HEK293 (cell line): ENCODE measurements at regions of chr12 and their contacts with region 1.

Region 1: DNA sequence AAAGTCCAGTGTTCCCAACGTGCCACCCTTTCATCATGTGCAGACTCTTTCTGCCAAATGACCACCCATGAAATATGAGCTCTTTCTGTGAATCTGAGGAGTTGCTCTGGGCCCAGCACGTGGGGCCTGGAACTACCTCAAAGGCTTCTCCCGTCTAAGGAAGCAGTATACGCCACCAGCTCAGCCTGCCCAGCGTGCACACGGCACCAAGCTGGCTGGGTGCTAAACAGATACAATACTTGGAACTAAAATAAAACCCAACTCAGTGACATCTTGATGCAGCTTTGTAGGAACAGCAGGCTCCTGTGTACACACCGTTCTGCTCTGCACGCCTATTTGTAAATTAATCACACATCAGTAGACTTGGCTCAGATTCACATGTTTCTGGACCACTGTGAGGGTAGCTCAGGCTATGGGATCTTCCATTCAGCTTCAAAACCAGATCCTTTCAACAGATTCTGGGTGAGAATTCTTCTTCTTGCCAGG is 74.8 kb downstream of the ARL6IP4 start:
- H3K4me3 ChIP-seq: no peak overlapping the region
- H3K27ac ChIP-seq: no peak overlapping the region
- H3K4me1 ChIP-seq: no peaks in the 10 kb centered on the region
- CTCF ChIP-seq: no peak

Region 2: DNA sequence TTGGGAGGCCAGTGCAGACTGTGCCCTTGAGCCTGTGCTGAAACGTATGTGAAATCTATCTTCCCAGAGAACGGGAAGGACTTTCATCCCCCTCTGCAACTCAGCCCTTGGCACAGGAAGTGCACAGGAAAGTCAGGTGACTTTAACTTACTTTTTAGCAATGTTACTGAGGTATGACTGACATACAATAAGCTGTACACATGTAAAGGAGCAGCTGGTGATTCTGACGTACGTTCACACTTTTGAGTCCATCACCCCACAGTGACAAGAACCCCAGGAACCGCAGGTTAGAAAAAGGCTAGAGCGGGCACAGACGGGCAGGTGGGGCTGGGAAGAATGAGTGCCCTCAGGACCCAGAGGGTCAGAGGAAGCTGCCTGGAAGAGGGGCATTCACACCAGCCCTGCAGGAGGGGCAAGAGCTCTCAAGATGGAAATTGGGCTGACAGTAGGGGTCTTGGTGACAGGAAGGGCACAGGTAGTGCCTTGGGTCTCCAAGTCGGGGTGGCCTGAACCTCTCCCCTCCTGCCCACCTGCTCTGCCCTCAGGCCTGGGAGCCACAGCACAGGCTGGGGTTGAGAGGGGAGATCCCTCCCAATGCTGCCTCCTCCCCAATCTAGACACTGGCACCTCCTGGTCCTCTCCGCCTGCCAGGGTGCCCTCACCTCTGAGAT is 26.7 kb before region 1 on chr12:
- CTCF ChIA-PET with region 1: no interaction called
- POLR2A ChIA-PET with region 1: no interaction called
- H3K4me3 ChIP-seq: no peak overlapping the region
- H3K27ac ChIP-seq: no peak overlapping the region
- H3K4me1 ChIP-seq: no peaks in the 10 kb centered on the region
- CTCF ChIP-seq: no peak

Region 3: DNA sequence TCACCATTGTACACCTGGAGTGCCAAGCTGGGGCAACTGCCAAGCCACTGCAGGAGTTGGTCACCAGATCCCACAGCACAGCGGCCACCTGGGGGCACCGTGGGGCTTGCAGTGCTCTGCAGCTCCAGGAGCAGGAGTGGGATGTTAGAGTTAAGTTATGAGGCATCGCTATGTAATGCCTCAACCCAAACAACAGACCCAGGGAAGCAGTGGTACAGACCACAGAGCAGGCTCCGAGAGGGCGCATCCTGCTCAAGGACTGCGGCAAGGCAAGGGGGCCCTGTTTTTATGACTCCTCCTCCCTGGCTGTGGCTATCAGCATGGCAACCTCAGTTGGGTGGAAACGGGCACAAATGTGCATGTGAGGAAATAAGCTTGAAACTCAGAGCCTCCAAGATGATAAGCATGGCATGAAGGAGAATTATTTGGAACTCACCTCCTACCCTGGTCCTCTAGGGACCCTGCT is 11.8 kb before region 1 on chr12:
- CTCF ChIA-PET with region 1: interaction called, 12 read pairs
- POLR2A ChIA-PET with region 1: no interaction called
- H3K4me3 ChIP-seq: no peak overlapping the region
- H3K27ac ChIP-seq: no peak overlapping the region
- H3K4me1 ChIP-seq: no peaks in the 10 kb centered on the region
- CTCF ChIP-seq: peak; percentile 68

Region 4: DNA sequence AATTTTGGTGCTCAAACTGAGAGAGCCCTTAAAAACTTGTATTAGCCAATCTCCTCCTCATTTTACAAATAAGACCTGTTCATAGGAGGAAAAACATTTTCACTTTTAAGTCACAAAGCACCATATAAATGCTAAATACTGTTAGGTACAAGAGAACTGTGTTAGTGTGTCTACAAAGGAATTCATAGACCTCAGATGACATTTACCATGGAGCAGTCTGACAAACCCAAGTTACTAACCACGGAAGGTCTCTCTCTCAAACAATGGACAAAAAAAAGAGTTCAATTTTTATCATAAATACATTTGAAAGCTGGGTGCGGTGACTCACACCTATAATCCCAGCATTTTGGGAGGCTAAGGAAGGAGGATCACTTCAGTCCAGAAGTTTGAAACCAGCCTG is 299.3 kb after region 1 on chr12:
- CTCF ChIA-PET with region 1: no interaction called
- POLR2A ChIA-PET with region 1: no interaction called
- H3K4me3 ChIP-seq: no peak overlapping the region
- H3K27ac ChIP-seq: no peak overlapping the region
- H3K4me1 ChIP-seq: no peaks in the 10 kb centered on the region; the same call in 1 of the 2 replicates
- CTCF ChIP-seq: no peak